Dorsolateral prefrontal cortex (tissue), 120 donors: ENCODE measurements at regions of chr7 and their contacts with region 1.

Region 1: DNA sequence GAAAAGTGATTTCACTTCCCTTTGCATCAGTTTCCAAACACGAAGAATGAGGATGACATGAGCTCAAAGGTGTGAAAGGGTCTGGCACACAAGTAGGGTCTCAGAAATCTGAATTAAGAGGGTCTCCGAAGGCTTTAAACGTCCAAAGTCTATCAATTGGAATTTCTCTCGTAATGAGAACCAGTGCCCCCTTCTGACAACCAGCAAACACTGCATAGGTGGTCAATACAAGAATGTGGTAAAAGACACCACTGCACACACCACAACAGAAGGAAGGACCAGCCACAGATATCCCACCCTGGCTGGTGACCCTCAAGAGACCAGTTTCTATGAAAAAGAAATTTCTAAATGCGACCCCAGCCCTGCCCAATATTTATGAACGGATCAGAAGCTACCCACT is 78.1 kb downstream of the CALN1 start:
- DNase-seq: no peak
- H3K4me3 ChIP-seq: no peak overlapping the region
- H3K27ac ChIP-seq: no peak overlapping the region
- H3K27me3 ChIP-seq: peaks cover 0 to 32% (median 11%) of the 10 kb centered on the region in 45 donors
- CTCF ChIP-seq: peak in 49 of 56 donors; percentile 20 to 62 (median 42)

Region 2: GRCh38 chr7:71846160-71846559 is 487.9 kb before region 1 on chr7:
- intact Hi-C with region 1: loop called in 1 of 2 experiments (anchors 10 kb)
- DNase-seq: no peak
- H3K4me3 ChIP-seq: no peak overlapping the region
- H3K27ac ChIP-seq: no peak overlapping the region
- H3K27me3 ChIP-seq: no peaks in the 10 kb centered on the region
- CTCF ChIP-seq: no peak

Region 3: DNA sequence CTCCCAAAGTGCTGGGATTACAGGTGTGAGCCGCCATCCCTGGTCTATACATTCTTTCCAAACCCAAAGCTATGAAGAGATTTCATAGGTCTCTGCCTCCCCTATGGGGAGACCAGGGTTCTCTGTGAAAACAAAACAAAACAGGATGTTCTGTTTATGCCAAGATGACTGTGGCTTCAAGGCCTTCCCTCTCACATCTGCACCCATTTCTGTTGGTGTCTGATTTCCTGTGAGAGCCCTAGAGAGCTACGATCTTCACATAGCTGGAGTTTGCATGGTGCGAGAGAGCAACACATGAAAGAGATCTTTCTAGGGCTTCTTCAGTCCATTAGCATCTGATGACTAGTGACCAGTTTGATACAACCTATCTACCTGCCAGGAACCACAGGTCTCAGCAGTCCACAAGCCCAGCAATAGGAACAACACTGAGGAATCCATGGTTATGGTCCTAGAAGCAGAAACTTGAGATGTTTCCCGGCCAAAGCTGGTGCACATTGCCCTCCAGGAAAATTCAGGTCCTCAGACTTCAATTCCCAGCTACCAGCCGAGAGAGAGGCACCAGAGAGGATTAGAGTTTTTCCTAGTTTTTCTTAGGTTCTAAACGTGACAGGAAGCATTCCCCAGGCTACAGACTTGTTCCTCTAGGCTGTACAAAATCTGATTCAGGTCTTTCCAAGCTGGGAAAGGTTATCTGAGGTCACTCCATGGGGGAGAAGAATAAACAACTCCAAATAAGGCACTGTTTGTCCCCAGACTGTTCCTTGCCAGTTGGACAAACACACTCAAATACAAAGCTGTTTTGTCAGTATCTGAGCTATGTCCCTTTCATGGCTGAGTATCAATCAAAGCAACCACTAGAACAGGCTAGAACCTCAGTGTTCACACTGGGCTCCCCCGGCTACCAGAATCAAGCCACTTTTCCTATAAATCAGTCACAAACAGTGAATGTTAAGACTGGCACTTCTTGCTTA is 181.6 kb before region 1 on chr7:
- intact Hi-C with region 1: loop called in 1 of 2 experiments (anchors 10 kb)
- DNase-seq: peak in 7 of 10 donors; percentile 16 to 73 (median 47)
- H3K4me3 ChIP-seq: peak overlapping the region in 6 of 59 donors; percentile 4 to 47 (median 18)
- H3K27ac ChIP-seq: peak overlapping the region; percentile 79 to 100 (median 99)
- H3K27me3 ChIP-seq: no peaks in the 10 kb centered on the region
- CTCF ChIP-seq: peak in 7 of 56 donors; percentile 8 to 28 (median 14)